G401 (cell line): ENCODE measurements at regions of chr4 and their contacts with region 1.

Region 1: DNA sequence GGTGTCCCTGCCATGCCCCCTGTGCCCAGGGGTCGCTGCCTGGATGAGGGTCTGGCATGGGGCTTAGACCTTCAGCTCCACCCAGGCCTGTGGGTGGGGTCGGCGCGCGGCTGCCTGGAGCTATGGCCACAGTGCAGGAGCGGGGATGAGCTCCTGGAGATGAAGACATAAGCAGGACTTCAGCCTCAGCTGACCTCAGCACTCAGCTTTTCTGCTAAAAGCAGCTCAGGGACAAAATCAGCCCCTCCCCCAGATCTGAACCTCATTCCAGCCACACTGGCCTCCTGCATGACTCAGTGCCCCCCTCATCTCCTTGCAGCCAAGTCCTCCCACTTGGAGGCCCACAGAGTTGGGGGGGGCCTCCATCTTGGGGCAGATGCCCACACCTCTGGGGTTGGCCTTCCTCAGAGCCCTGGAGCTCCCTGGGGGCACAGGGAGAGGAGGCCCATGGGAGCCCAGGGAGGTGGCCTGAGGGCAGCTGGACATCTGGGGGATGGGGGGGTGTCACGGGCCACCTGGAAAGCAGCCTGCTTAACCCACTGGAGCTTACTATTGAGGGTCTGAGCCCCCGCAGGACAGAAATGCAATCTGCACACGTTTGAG is 19.4 kb upstream of the CPLX1 start:
- DNase-seq: no peak

Region 2: DNA sequence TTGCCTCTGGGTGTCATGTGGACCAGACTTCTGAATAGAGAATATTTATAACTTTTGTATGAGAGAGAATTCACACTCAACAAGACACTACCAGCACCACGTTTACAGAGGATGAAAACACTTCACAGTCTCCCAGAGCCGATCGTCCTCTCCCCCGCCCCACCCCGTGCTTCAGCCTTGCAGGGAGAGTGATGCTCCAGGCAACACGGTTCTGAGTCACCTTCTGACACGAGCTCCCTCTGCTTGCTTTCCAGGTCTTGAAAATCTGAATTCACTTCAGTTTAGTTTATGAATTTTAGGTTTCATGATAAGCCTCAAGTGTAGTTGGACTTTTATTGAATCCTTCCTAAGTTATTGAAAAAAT is 79.2 kb before region 1 on chr4:
- in situ Hi-C with region 1: loop called (anchors 5 kb)
- DNase-seq: peak; percentile 37